H1 (cell line): ENCODE measurements at regions of chr12 and their contacts with region 1.

Region 1: DNA sequence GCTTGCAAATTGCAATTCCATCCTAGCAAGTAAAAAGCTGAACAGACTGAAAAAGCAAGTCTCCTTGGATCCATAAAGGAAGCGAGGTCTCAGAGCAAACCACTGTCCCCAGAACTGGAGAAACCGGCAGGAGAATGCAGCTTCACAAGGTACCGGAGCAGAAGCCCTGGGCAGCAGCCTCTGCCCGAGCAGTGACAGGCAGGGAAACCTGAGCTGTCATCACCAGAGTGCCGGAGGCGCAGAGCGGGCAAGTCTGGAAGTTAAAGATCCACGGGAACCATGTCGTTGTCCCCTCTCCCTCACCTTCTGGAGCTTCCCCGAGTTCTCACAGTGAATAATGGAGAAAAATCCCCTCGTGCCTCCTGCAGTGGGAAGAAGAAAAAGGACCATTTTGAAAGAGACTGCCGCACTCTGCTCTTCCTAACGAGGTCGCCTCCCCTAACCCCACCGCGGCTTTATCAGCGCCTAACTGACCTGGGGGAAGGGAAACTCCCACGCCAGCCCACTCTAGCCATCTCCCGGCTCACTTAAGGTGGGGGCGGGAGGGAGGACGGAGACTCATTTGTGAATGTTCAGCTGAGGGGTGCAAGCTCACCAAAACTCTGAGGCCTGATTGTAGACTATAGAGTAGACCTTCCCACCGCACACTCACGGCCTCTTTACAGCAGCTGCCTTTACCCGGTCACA is 27.8 kb downstream of the FBXL14 start:
- DNase-seq: no peak
- H3K4me3 ChIP-seq: no peak overlapping the region
- H3K27ac ChIP-seq: no peak overlapping the region
- H3K4me1 ChIP-seq: no peaks in the 10 kb centered on the region
- H3K27me3 ChIP-seq: no peaks in the 10 kb centered on the region; a peak in 1 of 7 replicates
- CTCF ChIP-seq: no peak
- EP300 ChIP-seq: no peak
- POLR2A ChIP-seq: no peak
- RAD21 ChIP-seq: no peak

Region 2: GRCh38 chr12:1481326-1481725 is 85.3 kb before region 1 on chr12:
- CTCF ChIA-PET with region 1: no interaction called
- POLR2A ChIA-PET with region 1: no interaction called
- DNase-seq: no peak
- H3K4me3 ChIP-seq: no peak overlapping the region
- H3K27ac ChIP-seq: no peak overlapping the region
- H3K4me1 ChIP-seq: no peaks in the 10 kb centered on the region
- H3K27me3 ChIP-seq: no peaks in the 10 kb centered on the region
- CTCF ChIP-seq: no peak
- EP300 ChIP-seq: no peak
- POLR2A ChIP-seq: no peak
- RAD21 ChIP-seq: no peak

Region 3: DNA sequence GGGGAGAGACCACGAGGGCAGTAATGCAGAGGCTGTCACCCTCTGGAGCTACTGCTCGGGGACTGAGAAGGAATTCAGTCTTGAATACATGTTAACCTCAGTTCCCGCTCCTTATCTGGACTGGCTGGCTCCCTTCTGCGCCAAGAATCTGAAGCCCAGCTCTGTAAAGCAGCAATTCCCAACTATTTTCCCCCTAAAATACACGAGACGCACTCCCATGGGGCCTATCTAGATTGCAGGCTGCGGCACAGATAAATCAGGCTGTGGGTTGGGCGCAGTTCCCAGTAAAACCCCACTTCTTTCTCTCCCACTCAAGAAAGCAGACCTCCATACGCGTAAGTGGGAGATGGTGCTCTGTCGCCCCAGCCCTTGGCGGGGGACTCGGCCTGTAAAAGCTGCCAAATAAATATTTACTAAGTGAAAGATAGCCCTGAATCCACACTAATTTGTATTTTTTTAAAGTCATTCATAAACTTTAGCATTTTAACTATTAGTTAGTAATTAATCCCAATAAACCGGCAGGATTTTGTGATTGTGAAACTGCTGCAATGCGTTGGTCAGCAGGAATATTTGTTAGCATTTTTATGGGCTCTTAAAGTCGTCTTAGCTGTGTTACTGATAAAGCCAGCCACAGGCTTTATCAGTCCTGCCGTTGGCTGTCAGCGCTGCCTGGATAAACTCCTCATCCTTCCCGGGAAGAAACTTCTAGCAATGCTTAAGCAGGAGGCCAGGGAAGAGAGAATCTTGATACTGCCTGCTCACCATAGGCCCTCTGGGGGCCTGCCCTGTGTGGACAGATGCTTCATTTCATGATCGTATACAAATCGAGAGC is 10.0 kb after region 1 on chr12:
- CTCF ChIA-PET with region 1: interaction called, 12 read pairs
- POLR2A ChIA-PET with region 1: no interaction called
- DNase-seq: no peak
- H3K4me3 ChIP-seq: no peak overlapping the region
- H3K27ac ChIP-seq: no peak overlapping the region
- H3K4me1 ChIP-seq: no peaks in the 10 kb centered on the region
- H3K27me3 ChIP-seq: no peaks in the 10 kb centered on the region; a peak in 4 of 7 replicates
- CTCF ChIP-seq: no peak
- EP300 ChIP-seq: no peak
- POLR2A ChIP-seq: no peak
- RAD21 ChIP-seq: no peak